ENCODE measurements at regions of chr9 and their contacts with region 1.

Region 1: DNA sequence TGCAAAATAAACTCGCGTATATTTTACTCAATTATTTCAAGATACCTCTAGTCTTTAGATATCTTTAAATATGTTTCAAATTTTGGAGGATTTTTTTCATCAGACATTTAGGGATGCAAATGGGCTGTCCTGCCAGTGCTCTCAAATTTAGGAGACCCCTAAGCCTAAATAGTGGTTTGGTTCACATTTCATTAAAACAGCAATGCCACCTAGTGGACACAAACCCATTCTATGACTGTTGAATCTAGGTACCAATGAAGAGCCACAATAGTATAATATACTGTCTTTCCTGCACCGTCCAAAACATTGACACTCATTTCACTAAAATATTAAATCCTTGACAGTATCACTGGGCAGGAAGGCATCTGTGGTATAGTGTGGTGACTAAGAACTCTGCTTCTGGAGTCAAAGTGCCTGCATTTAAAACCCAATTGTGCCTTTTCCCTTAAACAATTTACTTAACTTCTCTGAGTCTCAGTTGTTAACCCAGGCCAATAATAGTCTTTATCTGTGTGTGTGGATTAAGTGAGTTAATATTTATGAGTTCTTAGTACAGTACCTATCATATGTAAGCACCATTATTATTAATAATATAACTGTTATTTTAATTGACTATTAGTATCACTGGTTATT is 148.0 kb downstream of the RORB start:
- DNase-seq: peak; percentile 7
- ATAC-seq: peak; percentile 77
- H3K4me3 ChIP-seq: no peak overlapping the region
- H3K27ac ChIP-seq: no peak overlapping the region
- H3K4me1 ChIP-seq: no peaks in the 10 kb centered on the region
- H3K27me3 ChIP-seq: peaks cover 60% of the 10 kb centered on the region
- CTCF ChIP-seq: peak; percentile 29 to 74 (median 62); a peak in 5 of 6 replicates
- POLR2A ChIP-seq: no peak
- RAD21 ChIP-seq: peak; percentile 44

Region 2: DNA sequence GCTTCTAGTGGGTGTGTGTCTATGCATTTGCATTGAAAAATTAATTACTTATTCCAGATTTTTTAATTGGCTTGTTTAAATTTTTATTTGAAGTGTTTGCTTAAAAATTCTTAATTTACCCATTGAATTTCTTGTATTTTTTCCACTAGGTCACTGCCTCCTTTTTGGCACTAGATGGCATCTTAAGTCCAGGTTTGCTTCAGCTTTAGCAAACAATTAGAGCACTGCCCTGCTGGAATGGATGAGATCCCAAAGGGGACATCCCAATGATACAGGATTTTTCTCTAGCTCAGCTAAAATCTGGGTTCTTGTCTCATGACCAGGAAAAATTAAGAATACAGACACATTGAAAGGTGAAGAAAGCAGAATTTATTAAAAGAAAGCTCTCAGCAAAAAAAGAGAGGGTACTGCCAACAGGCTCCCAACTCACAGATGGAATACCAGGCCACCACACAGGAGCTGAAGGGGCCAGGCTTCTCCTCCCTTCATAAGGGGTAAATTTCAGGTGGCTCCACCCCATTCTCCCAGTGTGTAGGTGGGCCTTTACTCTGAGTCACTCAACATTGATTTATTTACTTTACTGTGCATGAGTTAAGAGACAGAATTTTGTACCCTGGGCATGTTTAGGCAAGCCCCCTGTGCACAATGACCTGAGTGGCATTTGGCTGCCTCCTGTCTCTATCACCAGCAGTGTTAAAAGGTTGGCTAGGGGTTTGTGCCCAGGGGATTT is 961.1 kb before region 1 on chr9:
- CTCF ChIA-PET with region 1: no interaction called
- POLR2A ChIA-PET with region 1: no interaction called
- RAD21 ChIA-PET with region 1: no interaction called
- intact Hi-C with region 1: loop called (anchors 2 kb)
- DNase-seq: peak; percentile 19
- ATAC-seq: peak; percentile 63; the same call in 1 of the 2 replicates
- H3K4me3 ChIP-seq: no peak overlapping the region
- H3K27ac ChIP-seq: no peak overlapping the region
- H3K4me1 ChIP-seq: no peaks in the 10 kb centered on the region
- H3K27me3 ChIP-seq: no peaks in the 10 kb centered on the region
- CTCF ChIP-seq: peak; percentile 24 to 58 (median 42); a peak in 4 of 6 replicates
- POLR2A ChIP-seq: no peak
- RAD21 ChIP-seq: peak; percentile 68

Region 3: DNA sequence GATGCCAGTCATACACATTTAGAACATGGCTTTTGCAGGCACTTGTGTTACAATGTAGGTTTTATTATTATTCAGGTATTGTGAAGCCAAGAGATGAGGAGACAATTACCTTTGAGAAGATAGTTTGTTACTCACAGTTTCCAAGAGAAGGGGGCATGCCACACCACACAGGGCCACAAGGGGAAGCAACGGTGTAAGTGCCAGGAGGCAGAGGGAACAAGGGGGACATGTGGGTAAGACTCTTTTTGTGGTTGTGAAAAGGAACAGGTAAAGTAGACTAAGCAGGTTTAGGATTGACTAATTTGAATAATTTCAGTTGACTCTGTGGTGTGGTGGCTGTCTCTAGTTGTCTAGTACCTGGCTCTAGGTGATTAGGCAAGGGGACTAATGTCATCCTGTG is 51.4 kb after region 1 on chr9:
- CTCF ChIA-PET with region 1: no interaction called
- POLR2A ChIA-PET with region 1: no interaction called
- RAD21 ChIA-PET with region 1: no interaction called
- intact Hi-C with region 1: no loop called
- DNase-seq: no peak
- ATAC-seq: no peak
- H3K4me3 ChIP-seq: no peak overlapping the region
- H3K27ac ChIP-seq: no peak overlapping the region
- H3K4me1 ChIP-seq: no peaks in the 10 kb centered on the region
- H3K27me3 ChIP-seq: peaks cover 36% of the 10 kb centered on the region
- CTCF ChIP-seq: peak in 2 of 3 experiments; percentile 41 to 50; a peak in 4 of 6 replicates
- POLR2A ChIP-seq: no peak
- RAD21 ChIP-seq: 0 out of 2 replicates have a peak, but pooled peaks have one; percentile 11

Region 4: DNA sequence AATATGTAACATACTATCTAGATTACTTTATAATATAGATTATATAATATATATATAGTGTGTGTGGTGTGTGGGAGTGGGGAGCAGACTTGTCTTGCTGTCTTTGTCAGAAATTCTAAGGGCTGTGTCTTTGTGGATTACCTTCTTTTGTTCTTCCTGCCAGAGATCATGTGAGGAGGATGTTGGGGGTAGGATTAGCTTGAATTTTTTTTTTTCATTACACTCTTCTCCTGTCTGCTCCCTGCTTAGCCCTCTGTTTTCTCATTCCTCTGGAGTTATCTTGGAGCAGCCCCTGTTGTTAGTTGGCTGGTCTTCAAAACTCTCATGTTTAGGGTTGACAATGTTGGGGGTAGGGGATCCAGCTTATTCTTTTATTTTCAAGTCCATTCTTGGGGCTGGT is 328.6 kb after region 1 on chr9:
- CTCF ChIA-PET with region 1: no interaction called
- POLR2A ChIA-PET with region 1: no interaction called
- RAD21 ChIA-PET with region 1: no interaction called
- intact Hi-C with region 1: no loop called
- DNase-seq: no peak
- ATAC-seq: no peak
- H3K4me3 ChIP-seq: no peak overlapping the region
- H3K27ac ChIP-seq: no peak overlapping the region
- H3K4me1 ChIP-seq: no peaks in the 10 kb centered on the region
- H3K27me3 ChIP-seq: no peaks in the 10 kb centered on the region
- CTCF ChIP-seq: no peak
- POLR2A ChIP-seq: no peak
- RAD21 ChIP-seq: no peak

Measured in HCT116 (cell line).